ENCODE measurements at regions of chr5 and their contacts with region 1.

Region 1: DNA sequence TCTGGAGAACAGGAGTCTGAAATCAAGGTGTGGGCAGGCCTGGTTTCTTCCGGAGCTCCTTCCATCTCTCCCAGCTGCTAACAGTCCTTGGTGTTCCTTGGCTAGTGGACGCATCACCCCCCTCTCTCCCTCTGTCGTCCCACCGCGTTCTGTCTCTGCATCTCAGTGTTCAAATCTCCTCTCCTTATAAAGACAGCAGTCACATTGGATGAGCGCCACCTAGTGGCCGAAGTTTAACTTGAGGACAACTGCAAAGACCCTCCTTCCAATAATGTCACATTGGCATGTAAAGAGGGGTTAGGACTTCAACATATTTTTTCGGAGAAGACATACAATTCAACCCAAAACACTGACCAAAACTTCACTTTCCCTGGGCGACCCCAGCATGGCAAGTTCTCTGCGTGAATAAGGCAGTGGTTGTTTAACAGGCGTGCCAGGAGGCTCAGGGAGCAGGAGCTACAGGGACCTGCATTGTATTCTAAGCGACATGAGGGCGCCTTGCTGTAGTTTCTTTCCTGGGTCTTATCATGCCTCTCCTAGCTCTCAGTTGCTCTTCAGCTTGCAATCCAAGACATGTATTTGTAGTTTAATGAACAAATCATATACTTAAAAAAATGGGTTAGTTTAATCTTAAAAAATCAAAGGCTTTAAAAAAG is 27.9 kb upstream of the BASP1 start:
- DNase-seq: no peak
- H3K4me3 ChIP-seq: no peak overlapping the region
- H3K27me3 ChIP-seq: no peaks in the 10 kb centered on the region
- CTCF ChIP-seq: peak; percentile 78

Region 2: DNA sequence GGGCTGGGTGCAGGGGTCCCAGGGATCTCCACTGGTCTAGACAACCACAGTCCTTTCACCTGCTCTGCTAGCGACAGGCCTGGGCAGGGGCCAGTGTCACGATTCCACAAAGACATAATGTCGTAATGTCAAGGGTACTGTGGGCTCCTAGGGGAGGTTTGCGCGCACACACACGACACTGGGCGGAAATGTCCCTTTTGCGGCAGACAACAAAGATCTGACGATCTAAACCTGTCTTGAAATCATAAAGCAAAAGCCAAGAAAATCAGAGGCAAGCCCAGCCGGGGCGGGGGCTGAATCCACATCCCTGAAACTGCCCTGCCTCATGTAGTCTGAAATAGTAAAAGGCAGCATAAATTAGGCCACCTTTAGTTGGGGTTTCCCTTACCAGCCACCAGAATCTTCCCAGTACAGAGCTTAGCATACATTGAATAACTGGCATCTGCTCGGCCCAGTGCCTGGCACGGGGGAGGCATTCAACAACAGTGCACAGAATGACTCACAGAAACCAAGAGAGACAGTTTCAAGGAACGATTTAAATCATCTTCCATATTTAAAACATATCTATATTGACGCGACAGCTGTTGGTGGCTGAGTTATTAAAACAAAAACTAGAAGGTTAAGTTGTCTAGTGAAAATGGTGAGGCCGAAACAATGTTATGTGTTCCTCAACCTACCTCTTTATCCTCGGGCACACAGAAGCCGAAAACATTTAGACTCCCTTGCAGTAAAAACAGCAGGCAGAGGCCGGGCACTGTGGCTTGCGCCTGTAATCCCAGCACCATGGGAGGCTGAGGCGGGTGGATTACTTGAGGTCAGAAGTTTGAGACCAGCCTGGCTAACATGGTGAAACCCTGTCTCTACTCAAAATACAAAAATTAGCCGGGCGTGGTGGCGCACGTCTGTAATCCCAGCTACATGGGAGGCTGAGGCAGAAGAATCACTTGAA is 404.4 kb before region 1 on chr5:
- CTCF ChIA-PET with region 1: interaction called, 28 read pairs
- POLR2A ChIA-PET with region 1: no interaction called
- DNase-seq: no peak
- H3K4me3 ChIP-seq: no peak overlapping the region
- H3K27me3 ChIP-seq: no peaks in the 10 kb centered on the region
- CTCF ChIP-seq: no peak

Region 3: GRCh38 chr5:16871746-16872339 is 317.7 kb before region 1 on chr5:
- CTCF ChIA-PET with region 1: interaction called, 14 read pairs
- POLR2A ChIA-PET with region 1: no interaction called
- DNase-seq: peak; percentile 79
- H3K4me3 ChIP-seq: no peak overlapping the region
- H3K27me3 ChIP-seq: no peaks in the 10 kb centered on the region
- CTCF ChIP-seq: no peak

Region 4: GRCh38 chr5:16934123-16934522 is 255.4 kb before region 1 on chr5:
- CTCF ChIA-PET with region 1: interaction called, 93 read pairs
- POLR2A ChIA-PET with region 1: interaction called, 3 read pairs
- DNase-seq: no peak
- H3K4me3 ChIP-seq: peak overlapping the region; percentile 97
- H3K27me3 ChIP-seq: no peaks in the 10 kb centered on the region
- CTCF ChIP-seq: peak; percentile 97

Region 5: GRCh38 chr5:17081142-17081541 is 108.4 kb before region 1 on chr5:
- CTCF ChIA-PET with region 1: interaction called, 10 read pairs
- POLR2A ChIA-PET with region 1: no interaction called
- DNase-seq: peak; percentile 76
- H3K4me3 ChIP-seq: no peak overlapping the region
- H3K27me3 ChIP-seq: no peaks in the 10 kb centered on the region
- CTCF ChIP-seq: peak; percentile 32; the same call in 1 of the 2 replicates

Region 6: DNA sequence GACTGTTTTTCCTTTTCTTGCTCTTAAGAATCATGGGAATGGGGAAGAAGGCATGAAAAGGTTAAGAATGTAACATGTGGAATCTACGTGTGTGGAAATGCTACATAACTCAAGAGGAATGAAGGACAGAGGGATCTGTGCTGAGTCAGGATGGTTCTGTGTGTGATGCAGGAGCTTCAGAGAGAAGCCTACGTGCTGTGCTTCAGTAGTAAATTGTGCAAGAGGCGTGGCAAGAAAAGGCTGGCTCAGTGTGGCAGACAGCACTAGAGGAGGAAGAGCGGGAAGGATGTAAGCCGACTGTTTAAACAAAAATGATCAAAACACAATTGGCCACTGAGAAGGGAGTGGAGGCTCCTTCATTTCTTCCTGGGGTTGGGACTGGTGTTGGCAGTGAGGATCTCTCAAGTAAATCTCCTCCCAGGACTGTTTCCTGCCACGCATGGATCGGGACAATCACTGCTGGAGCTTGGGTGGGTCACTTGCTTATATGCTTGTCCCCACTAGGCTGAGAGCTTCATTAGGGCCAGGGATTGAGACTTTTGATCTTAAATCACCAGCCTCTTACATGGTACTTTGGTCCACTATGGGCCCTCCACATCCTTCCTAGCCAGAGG is 31.5 kb before region 1 on chr5:
- CTCF ChIA-PET with region 1: interaction called, 16 read pairs
- POLR2A ChIA-PET with region 1: no interaction called
- DNase-seq: peak; percentile 95
- H3K4me3 ChIP-seq: no peak overlapping the region
- H3K27me3 ChIP-seq: no peaks in the 10 kb centered on the region
- CTCF ChIP-seq: no peak

Region 7: GRCh38 chr5:17426104-17426749 is 236.7 kb after region 1 on chr5:
- CTCF ChIA-PET with region 1: no interaction called
- POLR2A ChIA-PET with region 1: no interaction called
- DNase-seq: no peak
- H3K4me3 ChIP-seq: no peak overlapping the region
- H3K27me3 ChIP-seq: peaks cover 10% of the 10 kb centered on the region
- CTCF ChIP-seq: no peak